Caco-2 (cell line): ENCODE measurements at regions of chr15 and their contacts with region 1.

Region 1: GRCh38 chr15:70097337-70098169 is at the start of gene TLE3:
- DNase-seq: peak; percentile 97 to 98
- H3K4me3 ChIP-seq: peak within 1 kb of the TSS; percentile 89
- H3K4me3 Mint-ChIP-seq: peak within 1 kb of the TSS; percentile 98
- H3K27ac Mint-ChIP-seq: peak within 1 kb of the TSS; percentile 99
- H3K4me1 ChIP-seq: peaks cover 40% of the 10 kb centered on the region
- H3K4me1 Mint-ChIP-seq: peaks cover 19% of the 10 kb centered on the region
- H3K27me3 ChIP-seq: no peaks in the 10 kb centered on the region
- H3K27me3 Mint-ChIP-seq: no peaks in the 10 kb centered on the region
- CTCF ChIP-seq: no peak
- total RNA-seq, gene TLE3: 96.0 and 105 TPM in 2 replicates

Region 2: DNA sequence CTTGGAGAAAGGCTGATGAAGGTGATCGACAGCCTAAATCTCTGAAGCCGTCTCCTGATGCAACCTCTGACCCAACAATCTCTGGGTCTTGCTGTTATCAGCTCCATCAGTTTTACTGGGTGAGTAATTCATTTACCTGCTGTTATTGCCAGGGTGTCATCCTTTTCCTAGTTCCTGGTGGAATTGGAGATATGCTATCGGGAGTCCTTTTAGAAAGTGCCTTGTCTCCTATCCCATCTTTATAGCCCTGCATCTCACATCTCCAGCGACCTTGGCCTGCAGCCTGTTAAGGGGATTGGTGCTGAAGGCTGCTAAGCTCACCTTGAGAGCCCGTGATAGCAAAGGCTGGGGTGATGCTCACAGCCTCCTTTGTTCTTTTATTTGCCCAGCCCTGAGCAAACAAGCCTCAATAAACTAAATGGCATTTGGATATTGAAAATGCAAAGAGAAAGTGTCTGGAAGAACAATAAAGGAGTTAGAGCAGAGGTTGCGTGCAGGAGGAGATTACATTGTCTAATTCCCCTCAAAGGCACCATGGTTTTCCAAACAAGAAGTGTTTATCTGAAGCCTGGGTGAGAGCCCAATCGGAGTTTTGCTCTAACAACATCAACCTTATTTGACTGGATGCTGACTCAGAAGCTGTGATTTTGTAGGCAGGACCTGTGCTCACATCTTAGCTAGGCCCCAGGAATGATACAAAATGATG is 543.1 kb before region 1 on chr15:
- CTCF ChIA-PET with region 1: no interaction called
- POLR2A ChIA-PET with region 1: interaction called, 4 read pairs
- intact Hi-C with region 1: loop called (anchors 1 kb)
- DNase-seq: peak; percentile 88 to 94
- H3K4me3 ChIP-seq: no peak overlapping the region
- H3K4me3 Mint-ChIP-seq: no peak overlapping the region
- H3K27ac Mint-ChIP-seq: peak overlapping the region; percentile 61
- H3K4me1 ChIP-seq: peaks cover 44% of the 10 kb centered on the region
- H3K4me1 Mint-ChIP-seq: peaks cover 29% of the 10 kb centered on the region
- H3K27me3 ChIP-seq: no peaks in the 10 kb centered on the region
- H3K27me3 Mint-ChIP-seq: peaks cover 8% of the 10 kb centered on the region
- CTCF ChIP-seq: no peak

Region 3: DNA sequence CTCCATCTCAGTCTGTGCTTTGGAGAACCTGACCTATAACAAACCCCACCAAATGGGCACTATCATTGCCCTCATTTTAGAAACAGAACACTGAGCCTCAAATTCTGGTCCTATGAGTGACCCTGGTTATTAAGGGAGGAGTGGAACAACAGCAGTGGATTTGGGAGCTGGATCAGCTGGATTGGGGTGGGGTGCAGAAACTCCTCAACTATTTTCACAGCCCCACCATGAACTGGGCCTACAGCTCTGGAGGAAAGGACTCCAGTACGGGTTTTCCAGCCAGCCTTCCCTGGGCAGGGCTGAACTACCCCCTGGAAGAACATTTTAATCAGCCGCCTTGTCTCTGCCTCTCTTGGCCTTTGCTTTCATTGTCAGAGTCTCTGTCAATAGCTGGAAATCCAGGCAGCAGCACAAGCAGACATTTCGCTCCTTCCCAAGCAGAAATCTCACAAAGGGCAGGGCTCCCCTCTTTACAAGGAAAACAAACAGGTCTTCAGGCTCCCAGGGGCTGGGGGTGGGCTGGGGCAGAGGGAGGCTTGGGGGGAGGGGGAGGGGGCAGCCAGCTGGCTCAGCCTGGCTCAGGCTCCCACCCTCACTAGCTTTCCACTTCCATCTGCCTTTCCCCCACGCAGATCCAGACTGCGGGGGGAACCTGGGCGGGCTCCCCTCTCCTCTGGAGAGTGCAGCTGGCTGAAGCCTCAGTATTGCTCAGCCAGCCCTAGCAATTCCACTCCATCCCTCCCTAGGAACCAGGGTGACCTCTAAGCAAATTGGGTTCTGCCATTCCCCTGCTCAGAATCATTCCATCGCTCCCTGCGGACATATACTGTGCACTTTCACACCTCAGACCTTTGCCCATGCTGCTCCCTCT is 13.9 kb after region 1 on chr15:
- CTCF ChIA-PET with region 1: interaction called, 20 read pairs
- POLR2A ChIA-PET with region 1: interaction called, 16 read pairs
- intact Hi-C with region 1: loop called (anchors 1 kb)
- DNase-seq: peak; percentile 87
- H3K4me3 ChIP-seq: peak overlapping the region; percentile 11
- H3K4me3 Mint-ChIP-seq: peak overlapping the region; percentile 64
- H3K27ac Mint-ChIP-seq: peak overlapping the region; percentile 56
- H3K4me1 ChIP-seq: peaks cover 12% of the 10 kb centered on the region
- H3K4me1 Mint-ChIP-seq: peaks cover 15% of the 10 kb centered on the region
- H3K27me3 ChIP-seq: no peaks in the 10 kb centered on the region
- H3K27me3 Mint-ChIP-seq: no peaks in the 10 kb centered on the region
- CTCF ChIP-seq: no peak

Region 4: GRCh38 chr15:70170901-70171886 is 73.6 kb after region 1 on chr15:
- CTCF ChIA-PET with region 1: interaction called, 8 read pairs
- POLR2A ChIA-PET with region 1: no interaction called
- intact Hi-C with region 1: loop called (anchors 1 kb)
- DNase-seq: peak; percentile 62 to 68
- H3K4me3 ChIP-seq: no peak overlapping the region
- H3K4me3 Mint-ChIP-seq: no peak overlapping the region
- H3K27ac Mint-ChIP-seq: no peak overlapping the region
- H3K4me1 ChIP-seq: peaks cover 28% of the 10 kb centered on the region
- H3K4me1 Mint-ChIP-seq: peaks cover 28% of the 10 kb centered on the region
- H3K27me3 ChIP-seq: no peaks in the 10 kb centered on the region
- H3K27me3 Mint-ChIP-seq: peaks cover 3% of the 10 kb centered on the region
- CTCF ChIP-seq: no peak

Region 5: GRCh38 chr15:70362886-70363285 is 265.3 kb after region 1 on chr15:
- CTCF ChIA-PET with region 1: interaction called, 4 read pairs
- POLR2A ChIA-PET with region 1: no interaction called
- intact Hi-C with region 1: loop called (anchors 10 kb)
- DNase-seq: peak; percentile 54 to 63
- H3K4me3 ChIP-seq: no peak overlapping the region
- H3K4me3 Mint-ChIP-seq: no peak overlapping the region
- H3K27ac Mint-ChIP-seq: no peak overlapping the region
- H3K4me1 ChIP-seq: no peaks in the 10 kb centered on the region; the same call in 1 of the 2 replicates
- H3K4me1 Mint-ChIP-seq: peaks cover 5% of the 10 kb centered on the region
- H3K27me3 ChIP-seq: no peaks in the 10 kb centered on the region
- H3K27me3 Mint-ChIP-seq: no peaks in the 10 kb centered on the region
- CTCF ChIP-seq: peak; percentile 71 to 75

Region 6: GRCh38 chr15:70617076-70617910 is 519.7 kb after region 1 on chr15:
- CTCF ChIA-PET with region 1: no interaction called
- POLR2A ChIA-PET with region 1: no interaction called
- intact Hi-C with region 1: loop called (anchors 10 kb)
- DNase-seq: peak; percentile 75 to 81
- H3K4me3 ChIP-seq: no peak overlapping the region
- H3K4me3 Mint-ChIP-seq: peak overlapping the region; percentile 65
- H3K27ac Mint-ChIP-seq: peak overlapping the region; percentile 91
- H3K4me1 ChIP-seq: peaks cover 27% of the 10 kb centered on the region
- H3K4me1 Mint-ChIP-seq: peaks cover 25% of the 10 kb centered on the region
- H3K27me3 ChIP-seq: no peaks in the 10 kb centered on the region
- H3K27me3 Mint-ChIP-seq: no peaks in the 10 kb centered on the region
- CTCF ChIP-seq: no peak